ENCODE measurements at regions of chr1 and their contacts with region 1.

Region 1: GRCh38 chr1:24391882-24392603 is 21.5 kb downstream of the STPG1 start:
- DNase-seq: peak in 7 of 9 experiments; percentile 32 to 78 (median 65)
- ATAC-seq: peak; percentile 68
- H3K4me3 ChIP-seq: peak overlapping the region in 1 of 2 experiments; percentile 19
- H3K4me3 Mint-ChIP-seq: peak overlapping the region; percentile 78
- H3K27ac ChIP-seq: peak overlapping the region in 1 of 2 experiments; percentile 88
- H3K27ac Mint-ChIP-seq: peak overlapping the region; percentile 94
- H3K4me1 ChIP-seq: peaks cover 34% of the 10 kb centered on the region
- H3K4me1 Mint-ChIP-seq: peaks cover 31% of the 10 kb centered on the region
- H3K27me3 ChIP-seq: no peaks in the 10 kb centered on the region
- H3K27me3 Mint-ChIP-seq: no peaks in the 10 kb centered on the region
- CTCF ChIP-seq: peak; percentile 60

Region 2: GRCh38 chr1:23638786-23639532 is 753.1 kb before region 1 on chr1:
- CTCF ChIA-PET with region 1: no interaction called
- POLR2A ChIA-PET with region 1: no interaction called
- intact Hi-C with region 1: no loop called
- DNase-seq: no peak
- ATAC-seq: no peak
- H3K4me3 ChIP-seq: no peak overlapping the region
- H3K4me3 Mint-ChIP-seq: no peak overlapping the region
- H3K27ac ChIP-seq: no peak overlapping the region
- H3K27ac Mint-ChIP-seq: no peak overlapping the region
- H3K4me1 ChIP-seq: peaks cover 23% of the 10 kb centered on the region
- H3K4me1 Mint-ChIP-seq: peaks cover 28% of the 10 kb centered on the region
- H3K27me3 ChIP-seq: no peaks in the 10 kb centered on the region
- H3K27me3 Mint-ChIP-seq: no peaks in the 10 kb centered on the region
- CTCF ChIP-seq: no peak

Region 3: DNA sequence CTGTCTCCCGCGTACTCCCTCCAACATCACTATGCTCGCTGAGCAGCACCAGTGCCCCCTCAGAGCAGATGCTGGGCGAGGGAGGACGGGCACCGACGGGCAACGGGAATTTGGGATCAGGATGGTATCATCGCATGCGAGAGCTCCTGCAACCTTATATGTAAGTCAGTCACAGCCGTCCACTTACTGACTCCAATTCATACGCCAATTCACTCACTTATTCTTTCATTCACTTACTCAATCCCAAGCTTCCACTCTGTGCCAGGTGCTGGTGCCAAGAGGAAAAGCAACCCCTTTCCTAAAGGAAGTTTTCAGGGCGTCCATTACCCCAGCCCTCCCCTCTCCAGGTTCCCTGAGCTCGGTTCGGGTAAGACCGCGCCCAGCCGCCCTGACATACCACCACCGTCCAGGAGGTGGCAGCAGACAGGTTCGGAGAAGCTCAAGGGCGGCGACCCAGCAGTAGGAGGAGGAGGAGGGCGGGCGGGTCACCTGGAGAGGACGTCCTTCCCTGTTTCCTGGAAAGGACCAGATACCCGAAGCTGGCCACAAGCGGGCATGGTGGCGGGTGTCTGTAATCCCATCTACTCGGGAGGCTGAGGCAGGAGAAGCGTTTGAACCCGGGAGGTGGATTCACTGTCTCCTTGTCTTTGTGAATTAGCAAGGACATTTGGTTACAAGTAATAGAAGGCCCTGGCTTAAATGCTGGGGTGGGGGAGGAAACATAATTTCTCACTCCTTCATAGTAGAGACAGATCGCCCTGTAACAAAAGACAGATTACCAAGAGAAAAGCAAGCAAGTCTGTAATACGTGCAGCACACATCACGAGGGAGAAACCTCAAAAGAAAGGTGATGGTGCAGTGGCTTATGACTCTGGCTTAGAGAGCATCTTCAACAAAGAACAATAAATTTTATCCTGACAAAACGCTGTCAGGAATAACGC is 241.5 kb before region 1 on chr1:
- CTCF ChIA-PET with region 1: interaction called, 80 read pairs
- POLR2A ChIA-PET with region 1: interaction called, 4 read pairs
- intact Hi-C with region 1: loop called (anchors 1 kb)
- DNase-seq: peak; percentile 75 to 91 (median 87)
- ATAC-seq: peak; percentile 98
- H3K4me3 ChIP-seq: peak overlapping the region; percentile 29 to 38
- H3K4me3 Mint-ChIP-seq: peak overlapping the region; percentile 77
- H3K27ac ChIP-seq: no peak overlapping the region
- H3K27ac Mint-ChIP-seq: no peak overlapping the region
- H3K4me1 ChIP-seq: peaks cover 6% of the 10 kb centered on the region
- H3K4me1 Mint-ChIP-seq: peaks cover 11% of the 10 kb centered on the region
- H3K27me3 ChIP-seq: peaks cover 5 to 10% of the 10 kb centered on the region in 2 experiments
- H3K27me3 Mint-ChIP-seq: peaks cover 30% of the 10 kb centered on the region
- CTCF ChIP-seq: peak; percentile 88

Region 4: DNA sequence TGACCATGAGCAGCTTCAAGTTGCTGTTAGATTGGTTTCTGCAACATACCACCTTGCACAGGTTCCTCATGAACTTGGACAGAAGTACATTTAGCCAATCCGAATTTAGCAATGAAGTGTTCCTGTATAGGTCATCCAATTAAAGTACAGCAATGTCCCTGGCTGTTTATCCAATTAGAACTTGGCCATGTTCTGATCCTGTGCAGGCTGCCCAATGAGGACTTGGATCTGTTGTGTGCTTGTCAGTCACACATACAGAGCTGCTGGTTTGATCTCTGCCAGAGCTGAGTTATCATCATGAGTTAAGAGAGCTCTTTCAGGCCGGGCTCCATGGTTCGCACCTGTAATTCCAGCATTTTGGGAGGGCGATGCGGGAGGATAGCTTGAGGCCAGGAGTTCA is 183.0 kb before region 1 on chr1:
- CTCF ChIA-PET with region 1: interaction called, 46 read pairs
- POLR2A ChIA-PET with region 1: no interaction called
- intact Hi-C with region 1: no loop called
- DNase-seq: no peak
- ATAC-seq: no peak
- H3K4me3 ChIP-seq: no peak overlapping the region
- H3K4me3 Mint-ChIP-seq: no peak overlapping the region
- H3K27ac ChIP-seq: no peak overlapping the region
- H3K27ac Mint-ChIP-seq: no peak overlapping the region
- H3K4me1 ChIP-seq: no peaks in the 10 kb centered on the region
- H3K4me1 Mint-ChIP-seq: no peaks in the 10 kb centered on the region
- H3K27me3 ChIP-seq: no peaks in the 10 kb centered on the region
- H3K27me3 Mint-ChIP-seq: peaks cover 2% of the 10 kb centered on the region
- CTCF ChIP-seq: no peak

Region 5: DNA sequence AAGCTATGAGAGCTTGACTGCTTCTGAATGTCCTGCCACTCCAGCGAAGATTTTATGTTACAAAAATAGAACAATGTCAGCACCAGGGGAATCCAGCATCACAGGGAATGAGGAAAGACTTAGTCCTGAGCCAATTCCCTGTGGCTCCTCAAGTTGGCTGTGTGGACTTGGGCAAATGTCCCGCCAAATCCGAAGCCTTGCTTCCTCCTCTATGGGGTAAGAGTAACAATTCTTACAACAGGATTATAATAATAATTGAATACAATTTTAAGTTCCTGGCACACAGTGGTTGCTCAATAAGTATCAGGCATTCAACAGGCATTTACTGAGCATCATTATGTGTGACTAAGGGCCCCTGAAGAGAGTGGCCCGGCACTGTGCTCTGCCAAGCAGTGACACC is 22.8 kb before region 1 on chr1:
- CTCF ChIA-PET with region 1: interaction called, 10 read pairs
- POLR2A ChIA-PET with region 1: no interaction called
- intact Hi-C with region 1: no loop called
- DNase-seq: no peak
- ATAC-seq: no peak
- H3K4me3 ChIP-seq: no peak overlapping the region
- H3K4me3 Mint-ChIP-seq: no peak overlapping the region
- H3K27ac ChIP-seq: no peak overlapping the region
- H3K27ac Mint-ChIP-seq: no peak overlapping the region
- H3K4me1 ChIP-seq: no peaks in the 10 kb centered on the region
- H3K4me1 Mint-ChIP-seq: no peaks in the 10 kb centered on the region
- H3K27me3 ChIP-seq: no peaks in the 10 kb centered on the region
- H3K27me3 Mint-ChIP-seq: no peaks in the 10 kb centered on the region
- CTCF ChIP-seq: no peak

Region 6: DNA sequence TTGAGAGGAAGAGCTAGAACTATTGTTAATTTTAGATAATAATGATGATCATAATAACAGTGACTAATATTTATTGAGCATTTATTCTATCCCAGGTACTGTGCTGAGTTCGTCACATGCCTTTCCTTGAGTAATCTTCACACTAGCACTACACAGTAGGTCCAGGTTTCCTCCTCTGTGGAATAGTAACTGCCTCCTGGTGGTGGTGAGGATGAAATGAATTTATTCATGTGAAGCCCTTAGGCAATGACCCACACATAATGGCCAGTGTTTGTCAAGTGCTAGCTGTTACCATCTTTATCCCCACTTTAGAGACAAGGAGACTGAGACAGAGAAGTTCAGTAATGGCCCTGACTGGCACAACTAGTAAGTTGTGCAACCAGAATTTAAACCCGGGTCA is 29.5 kb after region 1 on chr1:
- CTCF ChIA-PET with region 1: interaction called, 21 read pairs
- POLR2A ChIA-PET with region 1: interaction called, 3 read pairs
- intact Hi-C with region 1: no loop called
- DNase-seq: no peak
- ATAC-seq: no peak
- H3K4me3 ChIP-seq: no peak overlapping the region
- H3K4me3 Mint-ChIP-seq: no peak overlapping the region
- H3K27ac ChIP-seq: no peak overlapping the region
- H3K27ac Mint-ChIP-seq: no peak overlapping the region
- H3K4me1 ChIP-seq: peaks cover 35% of the 10 kb centered on the region
- H3K4me1 Mint-ChIP-seq: peaks cover 82% of the 10 kb centered on the region
- H3K27me3 ChIP-seq: no peaks in the 10 kb centered on the region
- H3K27me3 Mint-ChIP-seq: no peaks in the 10 kb centered on the region
- CTCF ChIP-seq: no peak

Region 7: DNA sequence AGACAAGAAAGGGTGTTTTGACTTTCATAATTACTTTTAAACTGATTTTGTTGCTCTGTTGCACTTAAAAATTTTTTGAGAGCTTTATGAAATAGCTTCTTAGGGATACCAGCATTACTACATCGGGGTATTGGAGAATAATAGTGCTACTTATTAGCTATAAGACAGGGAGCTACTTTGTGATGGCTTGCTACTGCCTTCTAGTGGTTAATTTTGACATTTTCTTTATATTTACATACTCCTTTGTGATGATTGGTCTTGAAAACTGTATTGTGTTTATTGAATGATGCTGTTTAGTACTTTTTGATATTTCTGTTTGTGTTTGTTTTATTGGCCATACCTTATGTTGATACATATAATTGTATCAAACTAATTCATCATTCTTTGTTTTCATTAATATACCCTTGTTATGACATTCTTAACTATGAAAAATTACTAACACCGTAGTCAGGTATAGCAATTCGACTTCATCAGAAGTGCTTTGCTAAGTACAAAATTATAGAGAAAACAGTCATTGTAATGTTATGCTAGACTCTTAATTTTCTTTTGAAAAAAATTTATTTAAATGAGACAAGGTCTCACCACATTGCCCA is 438.7 kb after region 1 on chr1:
- CTCF ChIA-PET with region 1: interaction called, 8 read pairs
- POLR2A ChIA-PET with region 1: no interaction called
- intact Hi-C with region 1: loop called (anchors 5 kb)
- DNase-seq: peak in 2 of 9 experiments; percentile 68 to 74
- ATAC-seq: peak; percentile 52
- H3K4me3 ChIP-seq: no peak overlapping the region
- H3K4me3 Mint-ChIP-seq: no peak overlapping the region
- H3K27ac ChIP-seq: no peak overlapping the region
- H3K27ac Mint-ChIP-seq: no peak overlapping the region
- H3K4me1 ChIP-seq: no peaks in the 10 kb centered on the region
- H3K4me1 Mint-ChIP-seq: no peaks in the 10 kb centered on the region
- H3K27me3 ChIP-seq: peaks cover 0 to 3% of the 10 kb centered on the region in 2 experiments
- H3K27me3 Mint-ChIP-seq: peaks cover 13% of the 10 kb centered on the region
- CTCF ChIP-seq: peak; percentile 95

Region 8: DNA sequence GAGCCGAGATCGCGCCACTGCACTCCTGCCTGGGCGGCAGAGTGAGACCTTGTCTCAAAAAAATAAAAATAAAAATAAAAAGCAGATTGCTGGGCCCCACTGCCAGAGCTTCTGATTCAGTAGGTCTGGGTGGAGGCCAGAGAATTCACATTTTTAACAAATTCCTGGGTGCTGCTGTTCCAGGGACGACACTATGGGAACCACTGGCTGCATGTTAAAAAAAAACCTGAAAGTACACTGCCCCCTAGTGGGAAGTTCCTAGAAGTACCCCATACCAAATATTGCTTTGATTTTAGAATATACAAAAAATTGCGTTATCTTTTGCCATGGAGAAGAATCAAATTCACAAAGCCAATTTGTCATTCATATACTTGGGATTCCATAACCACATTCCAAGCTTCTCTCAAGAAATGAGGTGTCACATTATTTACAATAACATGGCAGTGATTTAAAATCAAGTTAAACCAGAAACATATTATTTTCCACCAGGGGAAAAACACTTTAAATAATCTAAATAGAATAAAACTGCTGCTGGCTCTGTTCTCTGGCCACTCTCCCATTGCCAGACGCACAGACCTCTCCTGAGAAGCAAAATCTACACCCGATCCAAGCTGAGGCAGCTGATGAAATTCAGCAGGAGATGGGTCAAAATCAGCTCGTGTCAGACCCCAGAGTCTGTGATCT is 812.9 kb after region 1 on chr1:
- CTCF ChIA-PET with region 1: no interaction called
- POLR2A ChIA-PET with region 1: no interaction called
- intact Hi-C with region 1: no loop called
- DNase-seq: peak in 5 of 9 experiments; percentile 13 to 73 (median 50)
- ATAC-seq: peak; percentile 70
- H3K4me3 ChIP-seq: no peak overlapping the region
- H3K4me3 Mint-ChIP-seq: no peak overlapping the region
- H3K27ac ChIP-seq: no peak overlapping the region
- H3K27ac Mint-ChIP-seq: no peak overlapping the region
- H3K4me1 ChIP-seq: no peaks in the 10 kb centered on the region
- H3K4me1 Mint-ChIP-seq: peaks cover 2% of the 10 kb centered on the region
- H3K27me3 ChIP-seq: no peaks in the 10 kb centered on the region
- H3K27me3 Mint-ChIP-seq: peaks cover 10% of the 10 kb centered on the region
- CTCF ChIP-seq: peak; percentile 85

Region 9: GRCh38 chr1:26126321-26127084 is 1734.5 kb after region 1 on chr1:
- CTCF ChIA-PET with region 1: no interaction called
- POLR2A ChIA-PET with region 1: no interaction called
- intact Hi-C with region 1: no loop called
- DNase-seq: peak; percentile 18 to 94 (median 58)
- ATAC-seq: peak; percentile 98
- H3K4me3 ChIP-seq: peak overlapping the region in 1 of 2 experiments; percentile 12
- H3K4me3 Mint-ChIP-seq: peak overlapping the region; percentile 54
- H3K27ac ChIP-seq: peak overlapping the region; percentile 16 to 21
- H3K27ac Mint-ChIP-seq: peak overlapping the region; percentile 88
- H3K4me1 ChIP-seq: peaks cover 26% of the 10 kb centered on the region
- H3K4me1 Mint-ChIP-seq: peaks cover 40% of the 10 kb centered on the region
- H3K27me3 ChIP-seq: peaks cover 0 to 7% of the 10 kb centered on the region in 2 experiments
- H3K27me3 Mint-ChIP-seq: no peaks in the 10 kb centered on the region
- CTCF ChIP-seq: no peak

Measured in CD8-positive, alpha-beta T cell (primary cell).